Thyroid gland (tissue), 4 donors: ENCODE measurements at regions of chr5 and their contacts with region 1.

Region 1: DNA sequence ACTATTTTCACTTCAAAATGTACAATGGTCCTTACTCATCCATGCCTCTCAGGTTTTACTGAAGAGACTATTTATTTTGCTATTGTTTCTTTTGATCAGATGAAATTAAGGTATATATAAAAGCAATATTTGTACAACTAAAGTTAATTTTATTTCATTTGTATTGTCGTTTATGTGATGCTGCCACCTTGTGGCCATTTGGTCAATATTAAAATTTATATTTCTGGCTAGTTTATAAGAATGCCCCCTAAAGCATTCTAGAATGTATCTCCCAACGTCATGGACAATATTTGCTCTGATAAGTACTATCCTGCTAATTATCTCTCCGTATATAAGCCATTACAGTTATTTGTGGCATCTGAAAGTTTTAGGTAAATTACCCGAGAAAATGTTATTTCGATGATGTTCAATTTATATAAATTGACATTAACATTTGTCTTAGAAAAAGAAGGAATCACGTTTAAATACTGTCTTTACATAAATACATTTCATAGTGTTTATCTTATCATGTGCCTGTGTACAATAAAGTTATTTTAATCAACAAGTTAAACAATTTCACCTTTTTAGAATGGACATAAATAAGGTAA is 680.0 kb downstream of the TAF11L14 start:
- DNase-seq: no peak
- H3K4me3 ChIP-seq: no peak overlapping the region
- H3K27ac ChIP-seq: no peak overlapping the region
- H3K4me1 ChIP-seq: no peaks in the 10 kb centered on the region
- H3K27me3 ChIP-seq: no peaks in the 10 kb centered on the region
- CTCF ChIP-seq: peak in 4 of 6 experiments; percentile 42 to 55 (median 42)
- POLR2A ChIP-seq: no peak

Region 2: DNA sequence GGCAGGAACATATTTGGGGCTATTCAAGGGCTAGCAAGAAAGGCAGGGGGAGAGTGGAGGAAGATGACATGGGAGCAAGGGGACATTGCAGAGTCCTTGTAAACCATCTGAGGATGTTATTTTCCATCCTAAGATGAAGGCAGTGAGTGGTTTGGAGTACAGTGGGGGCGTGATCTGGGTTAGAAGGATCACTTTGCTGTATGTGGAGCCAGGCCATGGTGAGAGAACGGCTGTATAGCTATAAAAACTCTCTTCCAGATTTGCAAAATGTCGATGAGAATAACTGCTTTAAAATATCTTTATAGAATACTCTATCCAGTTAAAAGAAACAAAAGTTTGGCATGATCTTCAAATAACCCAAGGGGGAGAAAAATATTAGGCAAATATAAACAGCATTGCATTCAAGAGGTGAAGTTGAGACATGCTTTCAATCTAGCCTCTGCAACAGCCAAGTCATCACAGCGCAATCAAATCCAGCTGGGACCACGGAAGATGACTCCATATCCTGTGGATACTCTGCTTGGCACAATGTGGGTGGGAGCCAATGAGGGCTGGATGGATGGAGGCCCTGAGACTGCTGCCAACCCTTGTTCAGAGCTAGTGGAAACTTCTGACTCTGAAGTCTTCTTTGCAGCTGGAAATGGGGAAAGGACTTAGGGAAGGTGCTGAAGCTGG is 1208.4 kb before region 1 on chr5:
- intact Hi-C with region 1: no loop called
- DNase-seq: no peak
- H3K4me3 ChIP-seq: no peak overlapping the region
- H3K27ac ChIP-seq: no peak overlapping the region
- H3K4me1 ChIP-seq: no peaks in the 10 kb centered on the region
- H3K27me3 ChIP-seq: no peaks in the 10 kb centered on the region
- CTCF ChIP-seq: no peak
- POLR2A ChIP-seq: no peak

Region 3: DNA sequence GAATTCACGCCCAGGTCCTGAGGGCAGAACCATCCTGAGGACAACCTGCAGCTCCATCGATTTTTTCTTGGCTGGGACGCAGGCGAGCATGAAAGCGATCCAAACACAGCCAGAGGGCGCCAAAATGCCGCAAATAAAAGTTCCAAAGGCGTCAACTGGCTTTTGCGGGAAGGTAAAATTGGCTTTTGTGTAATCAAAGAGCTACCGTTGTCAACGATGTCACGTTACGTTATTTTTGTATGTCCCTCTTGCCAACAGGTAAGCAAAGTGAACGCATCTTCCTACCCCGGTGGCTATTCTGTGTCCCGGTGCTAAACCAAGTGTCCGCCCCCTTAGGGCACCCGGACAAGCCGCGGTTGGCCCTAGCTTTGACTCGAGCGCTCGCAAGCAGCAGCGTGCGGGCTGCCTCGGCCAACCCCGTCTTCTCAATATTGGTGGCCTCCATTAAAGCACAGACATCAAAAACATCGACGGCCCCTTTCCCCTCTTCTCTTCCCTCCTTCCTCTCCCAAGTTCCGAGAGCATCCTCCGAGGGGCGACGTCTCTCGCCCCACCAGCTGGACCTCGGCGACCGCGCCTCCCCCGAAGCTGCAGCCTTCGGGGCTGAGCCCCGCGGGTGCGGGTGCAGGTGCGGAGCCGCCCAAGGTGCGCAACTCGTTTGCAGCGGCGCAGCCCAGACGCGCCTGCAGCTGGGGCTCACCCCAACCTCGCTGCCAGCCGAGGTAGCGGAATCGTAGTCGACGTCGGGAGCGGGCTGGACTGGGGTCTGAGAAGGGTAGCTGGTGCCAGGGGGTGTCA is 1097.9 kb before region 1 on chr5:
- intact Hi-C with region 1: loop called (anchors 10 kb)
- DNase-seq: peak; percentile 83 to 86
- H3K4me3 ChIP-seq: peak overlapping the region in 1 of 3 donors; percentile 57
- H3K27ac ChIP-seq: peak overlapping the region in 2 of 3 donors; percentile 13 to 63
- H3K4me1 ChIP-seq: peaks cover 0 to 4% of the 10 kb centered on the region in 2 donors
- H3K27me3 ChIP-seq: no peaks in the 10 kb centered on the region
- CTCF ChIP-seq: peak; percentile 39 to 88 (median 75)
- POLR2A ChIP-seq: no peak

Region 4: DNA sequence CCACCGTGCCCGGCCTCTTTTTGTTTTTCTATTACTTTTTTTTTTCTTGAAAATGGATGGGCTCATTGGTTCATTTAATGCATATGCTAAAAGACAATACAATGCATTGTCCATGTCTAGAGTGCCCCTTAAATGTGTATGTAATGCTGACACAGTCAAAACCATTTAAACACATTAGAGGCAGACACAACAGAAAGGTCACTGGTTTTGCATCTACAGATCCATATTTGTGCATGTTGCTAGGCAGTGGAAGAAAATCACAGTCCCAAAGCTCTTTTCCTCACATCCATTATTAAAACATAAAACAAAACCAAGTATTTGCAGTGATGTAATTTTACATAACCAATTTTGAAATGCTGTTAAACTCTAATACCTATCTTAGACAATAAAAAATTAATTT is 291.0 kb before region 1 on chr5:
- intact Hi-C with region 1: no loop called
- DNase-seq: no peak
- H3K4me3 ChIP-seq: no peak overlapping the region
- H3K27ac ChIP-seq: no peak overlapping the region
- H3K4me1 ChIP-seq: peaks cover 9 to 10% of the 10 kb centered on the region in 2 donors
- H3K27me3 ChIP-seq: no peaks in the 10 kb centered on the region
- CTCF ChIP-seq: no peak
- POLR2A ChIP-seq: no peak

Region 5: GRCh38 chr5:18181575-18181974 is 132.7 kb before region 1 on chr5:
- intact Hi-C with region 1: no loop called
- DNase-seq: no peak
- H3K4me3 ChIP-seq: no peak overlapping the region
- H3K27ac ChIP-seq: no peak overlapping the region
- H3K4me1 ChIP-seq: no peaks in the 10 kb centered on the region
- H3K27me3 ChIP-seq: no peaks in the 10 kb centered on the region
- CTCF ChIP-seq: no peak
- POLR2A ChIP-seq: no peak